Calu3 (cell line): ENCODE measurements at regions of chr1 and their contacts with region 1.

Region 1: DNA sequence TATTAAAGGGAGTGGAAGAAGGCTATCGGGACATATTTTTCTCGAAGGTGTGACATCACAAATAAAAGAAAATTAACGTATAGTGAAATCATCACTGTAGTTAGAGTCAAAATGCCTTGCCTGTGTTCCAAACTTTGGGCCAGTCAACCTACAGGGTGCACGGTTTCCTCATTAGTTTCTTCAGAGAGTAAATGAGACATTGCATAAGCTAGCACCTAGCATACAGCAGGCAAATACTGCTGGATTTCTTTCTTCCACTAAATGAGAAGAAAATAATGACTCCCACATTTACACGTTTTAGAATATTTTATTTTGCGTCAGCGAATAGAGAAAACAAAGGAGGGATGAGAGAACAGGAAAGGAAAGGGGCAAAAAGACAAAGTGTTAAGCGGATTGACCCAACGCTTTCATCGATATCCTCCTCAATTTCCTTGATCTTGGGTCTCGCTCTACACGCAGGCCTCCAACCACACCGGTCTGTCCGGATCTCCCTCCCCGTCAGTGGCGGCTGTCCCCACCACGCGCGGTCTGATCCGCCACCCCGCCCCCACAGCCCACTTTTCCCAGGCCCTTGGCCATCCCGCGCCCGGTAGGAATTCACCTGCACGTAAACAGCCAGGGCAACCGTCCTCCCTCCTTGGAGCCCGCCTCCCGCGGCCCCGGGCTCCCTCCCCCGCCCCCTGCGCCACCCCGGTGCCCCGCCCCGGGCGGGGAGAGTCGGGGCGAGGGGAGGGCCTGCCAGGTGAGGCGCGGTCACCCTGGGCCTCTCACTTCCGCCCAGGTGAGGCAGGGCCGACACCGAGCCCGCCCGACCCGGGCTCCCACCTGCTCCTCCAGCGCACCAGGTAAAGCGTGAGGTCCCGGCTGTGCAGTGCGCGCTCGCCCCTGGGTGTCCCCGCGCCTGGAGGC is at the start of gene PATJ:
- DNase-seq: peak; percentile 90
- H3K4me3 Mint-ChIP-seq: peak within 1 kb of the TSS; percentile 88
- H3K27ac Mint-ChIP-seq: peak within 1 kb of the TSS; percentile 96
- H3K4me1 Mint-ChIP-seq: peaks cover 46% of the 10 kb centered on the region
- H3K27me3 Mint-ChIP-seq: no peaks in the 10 kb centered on the region
- CTCF ChIP-seq: no peak
- total RNA-seq, gene PATJ: 58.4 and 72.2 TPM in 2 replicates

Region 2: DNA sequence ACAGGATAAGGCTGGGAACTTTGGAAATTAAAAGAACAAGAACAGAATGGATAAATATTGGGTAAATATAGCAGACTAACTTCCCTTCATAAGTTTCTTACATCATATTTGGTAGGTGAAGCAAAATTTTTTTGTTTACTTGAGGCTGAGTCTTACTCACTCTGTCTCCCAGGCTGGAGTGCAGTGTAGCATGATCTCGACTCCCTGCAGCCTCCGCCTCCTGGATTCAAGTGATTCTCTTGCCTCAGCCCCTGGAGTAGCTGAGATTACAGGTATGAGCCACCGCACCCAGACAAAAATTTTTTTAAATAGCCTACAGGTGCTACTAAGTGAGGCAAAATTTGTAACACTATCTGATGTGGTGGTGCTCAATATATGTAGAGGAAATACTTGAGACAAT is 67.7 kb before region 1 on chr1:
- CTCF ChIA-PET with region 1: no interaction called
- intact Hi-C with region 1: no loop called
- DNase-seq: no peak
- H3K4me3 Mint-ChIP-seq: no peak overlapping the region
- H3K27ac Mint-ChIP-seq: no peak overlapping the region
- H3K4me1 Mint-ChIP-seq: no peaks in the 10 kb centered on the region
- H3K27me3 Mint-ChIP-seq: no peaks in the 10 kb centered on the region
- CTCF ChIP-seq: no peak

Region 3: GRCh38 chr1:61724813-61725694 is 16.9 kb before region 1 on chr1 and contains the start of gene TM2D1:
- CTCF ChIA-PET with region 1: no interaction called
- intact Hi-C with region 1: loop called (anchors 2 kb)
- DNase-seq: peak; percentile 87
- H3K4me3 Mint-ChIP-seq: peak within 1 kb of the TSS; percentile 97
- H3K27ac Mint-ChIP-seq: peak within 1 kb of the TSS; percentile 98
- H3K4me1 Mint-ChIP-seq: peaks cover 8% of the 10 kb centered on the region
- H3K27me3 Mint-ChIP-seq: no peaks in the 10 kb centered on the region
- CTCF ChIP-seq: no peak
- total RNA-seq, gene TM2D1: 38.7 and 45.8 TPM in 2 replicates

Region 4: DNA sequence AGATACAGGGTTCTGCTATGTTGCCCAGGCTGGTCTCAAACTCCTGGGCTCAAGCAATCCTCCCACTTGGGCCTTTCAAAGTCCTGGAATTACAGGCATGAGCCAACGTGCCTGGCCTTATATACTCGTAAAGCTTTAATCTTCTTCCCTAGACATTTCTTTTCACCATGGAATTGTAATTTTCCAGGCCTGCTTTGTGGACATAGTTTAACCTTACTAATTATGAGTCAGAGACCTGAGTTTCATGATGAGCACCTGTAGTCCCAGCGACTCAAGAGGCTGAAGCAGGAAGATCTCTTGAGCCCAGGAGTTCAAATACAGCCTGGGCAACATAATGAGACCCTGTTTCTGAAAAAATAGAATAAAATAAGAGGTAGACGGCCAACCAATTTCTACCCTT is 12.6 kb after region 1 on chr1:
- CTCF ChIA-PET with region 1: no interaction called
- intact Hi-C with region 1: loop called (anchors 1 kb)
- DNase-seq: no peak
- H3K4me3 Mint-ChIP-seq: no peak overlapping the region
- H3K27ac Mint-ChIP-seq: peak overlapping the region; percentile 64
- H3K4me1 Mint-ChIP-seq: peaks cover 13% of the 10 kb centered on the region
- H3K27me3 Mint-ChIP-seq: no peaks in the 10 kb centered on the region
- CTCF ChIP-seq: no peak